Activated CD8-positive, alpha-beta memory T cell treated with anti-CD3 and anti-CD28 coated beads, Interleukin-2, amount 10 ng/mL, durations not matched to agents 7 days and 5 days (primary cell): ENCODE measurements at regions of chr15 and their contacts with region 1.

Region 1: DNA sequence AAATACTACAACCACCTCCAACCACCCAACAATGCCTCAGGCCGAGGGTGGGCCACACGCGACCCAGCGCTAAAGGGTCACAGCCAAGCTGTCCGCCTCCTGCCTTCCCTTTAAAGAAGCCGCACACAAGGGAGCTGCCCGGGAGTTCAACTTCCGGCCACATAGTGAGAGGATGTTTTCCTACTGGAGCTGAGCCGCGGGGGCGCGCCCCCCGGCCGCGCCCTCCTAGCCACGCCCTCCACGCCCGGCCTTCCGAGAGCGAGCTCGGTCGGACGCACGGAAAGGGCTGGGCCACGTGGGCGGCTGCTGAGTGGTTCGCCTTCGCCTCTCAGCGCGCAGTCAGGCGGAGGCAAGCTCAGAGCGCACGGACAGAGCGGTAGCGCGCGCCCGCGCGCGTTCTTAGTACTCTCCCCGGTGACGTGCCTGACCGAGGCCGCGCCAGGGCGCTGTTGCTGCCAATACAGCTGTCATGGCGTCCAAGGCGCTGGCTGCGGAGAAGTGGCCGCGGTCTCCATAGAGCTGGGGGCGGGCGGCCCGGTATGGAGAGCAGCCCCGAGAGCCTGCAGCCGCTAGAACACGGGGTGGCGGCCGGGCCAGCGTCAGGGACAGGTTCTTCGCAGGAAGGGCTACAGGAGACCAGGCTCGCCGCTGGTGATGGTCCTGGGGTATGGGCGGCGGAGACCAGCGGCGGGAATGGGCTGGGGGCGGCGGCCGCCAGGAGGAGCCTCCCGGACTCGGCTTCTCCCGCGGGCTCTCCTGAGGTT is at the start of gene MINDY2:
- DNase-seq: peak; percentile 98
- ATAC-seq: peak; percentile 99
- H3K4me3 Mint-ChIP-seq: no peak within 1 kb of the TSS
- H3K27ac Mint-ChIP-seq: peak within 1 kb of the TSS; percentile 87
- H3K4me1 Mint-ChIP-seq: peaks cover 6% of the 10 kb centered on the region
- H3K27me3 Mint-ChIP-seq: no peaks in the 10 kb centered on the region
- total RNA-seq, gene MINDY2: 12.0 to 16.9 TPM

Region 2: DNA sequence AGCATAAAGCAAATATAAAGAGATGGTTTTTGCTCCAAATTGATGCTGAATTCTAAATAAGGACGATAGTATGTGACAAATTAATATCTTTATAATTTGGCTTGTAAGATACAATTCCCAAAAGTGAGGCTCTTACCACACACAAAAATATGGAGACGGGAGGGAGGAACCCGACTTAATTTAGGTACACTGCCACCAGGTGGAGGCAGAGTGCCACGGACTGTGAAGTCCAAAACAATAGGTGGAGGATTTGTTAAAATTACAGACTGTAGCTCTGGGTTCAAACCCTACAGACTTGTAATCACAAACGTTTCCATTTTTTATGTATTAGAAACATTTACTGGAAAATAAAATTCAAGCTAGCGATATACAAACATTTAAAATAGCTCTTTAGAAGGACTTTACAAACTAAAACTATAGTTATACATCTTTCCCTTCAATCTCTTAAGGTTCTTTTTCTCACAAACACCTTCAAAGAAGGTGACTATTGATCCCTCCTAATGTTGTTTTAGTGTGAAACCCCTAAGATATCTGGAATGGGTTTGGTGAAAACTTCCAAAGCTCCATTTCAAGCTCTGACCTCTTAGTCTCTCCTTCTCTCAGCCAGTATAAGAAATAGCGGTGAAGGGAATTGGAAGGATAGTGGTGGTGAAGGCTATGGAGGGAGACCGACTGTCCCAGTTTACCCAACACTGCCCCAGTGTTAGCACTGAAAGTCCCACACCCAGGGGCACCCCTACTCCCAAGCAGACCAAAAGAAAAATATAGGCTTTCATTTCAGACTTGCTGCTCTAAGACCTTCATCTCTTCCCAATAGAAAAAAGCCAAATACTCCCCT is 543.1 kb before region 1 on chr15:
- CTCF ChIA-PET with region 1: interaction called, 13 read pairs
- DNase-seq: peak; percentile 76
- ATAC-seq: peak; percentile 71
- H3K4me3 Mint-ChIP-seq: no peak overlapping the region
- H3K27ac Mint-ChIP-seq: no peak overlapping the region
- H3K4me1 Mint-ChIP-seq: peaks cover 10% of the 10 kb centered on the region
- H3K27me3 Mint-ChIP-seq: peaks cover 18% of the 10 kb centered on the region

Region 3: GRCh38 chr15:58749532-58750337 is 21.3 kb before region 1 on chr15 and contains the start of gene ADAM10:
- CTCF ChIA-PET with region 1: interaction called, 17 read pairs
- DNase-seq: peak; percentile 99
- ATAC-seq: peak; percentile 94
- H3K4me3 Mint-ChIP-seq: peak within 1 kb of the TSS; percentile 93
- H3K27ac Mint-ChIP-seq: peak within 1 kb of the TSS; percentile 94
- H3K4me1 Mint-ChIP-seq: peaks cover 31% of the 10 kb centered on the region
- H3K27me3 Mint-ChIP-seq: no peaks in the 10 kb centered on the region
- total RNA-seq, gene ADAM10: 141 to 151 TPM

Region 4: GRCh38 chr15:58761010-58761388 is 10.0 kb before region 1 on chr15:
- CTCF ChIA-PET with region 1: interaction called, 23 read pairs
- DNase-seq: peak; percentile 50
- ATAC-seq: no peak
- H3K4me3 Mint-ChIP-seq: no peak overlapping the region
- H3K27ac Mint-ChIP-seq: no peak overlapping the region
- H3K4me1 Mint-ChIP-seq: peaks cover 21% of the 10 kb centered on the region
- H3K27me3 Mint-ChIP-seq: no peaks in the 10 kb centered on the region